GM10248 (cell line): ENCODE measurements at regions of chr13 and their contacts with region 1.

Region 1: GRCh38 chr13:49454388-49455006 is 10.4 kb downstream of the SETDB2 start:
- DNase-seq: peak; percentile 51
- CTCF ChIP-seq: no peak

Region 2: DNA sequence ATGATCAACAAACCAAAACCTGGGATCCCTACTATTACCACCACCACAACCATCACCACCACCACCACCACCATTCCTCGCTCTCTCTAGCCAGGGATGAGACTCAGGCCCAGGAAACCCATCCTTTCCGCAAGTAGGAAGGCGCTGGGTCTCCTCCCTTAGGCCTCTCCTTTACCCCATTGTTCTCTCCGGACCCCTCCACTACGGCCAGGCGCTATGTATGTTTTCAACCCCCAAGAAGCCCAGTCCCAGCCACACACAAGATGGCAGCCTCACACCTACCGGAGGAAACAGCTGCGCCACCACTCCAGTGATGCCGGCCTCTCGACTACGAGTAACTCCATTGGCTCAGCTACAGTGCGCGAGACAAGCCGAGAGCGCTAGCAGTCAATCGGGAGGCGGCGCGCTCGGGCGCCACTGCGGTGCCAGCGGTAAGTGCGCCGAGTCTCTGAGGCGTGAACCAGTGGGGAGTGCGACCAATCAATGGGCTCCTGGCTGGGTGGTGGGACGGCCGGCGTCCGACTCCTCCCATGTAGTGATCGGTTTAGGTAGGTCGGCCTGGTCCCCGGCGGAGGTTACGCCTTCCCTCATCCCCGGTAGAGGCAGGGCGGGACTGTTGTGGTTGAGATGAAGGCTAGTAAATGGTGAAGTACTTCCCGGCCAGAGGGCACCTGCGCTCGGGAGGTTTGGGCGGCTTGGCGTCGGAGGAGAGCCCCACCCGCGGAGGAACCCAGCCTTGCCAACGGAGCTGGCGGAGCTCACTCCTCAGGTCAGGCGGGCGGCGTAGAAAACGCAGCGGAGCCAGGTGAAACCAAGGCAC is 10.6 kb before region 1 on chr13 and contains the starts of genes CAB39L and SETDB2:
- CTCF ChIA-PET with region 1: interaction called, 6 read pairs
- POLR2A ChIA-PET with region 1: interaction called, 12 read pairs
- DNase-seq: peak; percentile 96
- CTCF ChIP-seq: peak; percentile 26

Region 3: GRCh38 chr13:49512578-49512977 is 58.1 kb after region 1 on chr13:
- CTCF ChIA-PET with region 1: no interaction called
- POLR2A ChIA-PET with region 1: no interaction called
- DNase-seq: no peak
- CTCF ChIP-seq: no peak

Region 4: DNA sequence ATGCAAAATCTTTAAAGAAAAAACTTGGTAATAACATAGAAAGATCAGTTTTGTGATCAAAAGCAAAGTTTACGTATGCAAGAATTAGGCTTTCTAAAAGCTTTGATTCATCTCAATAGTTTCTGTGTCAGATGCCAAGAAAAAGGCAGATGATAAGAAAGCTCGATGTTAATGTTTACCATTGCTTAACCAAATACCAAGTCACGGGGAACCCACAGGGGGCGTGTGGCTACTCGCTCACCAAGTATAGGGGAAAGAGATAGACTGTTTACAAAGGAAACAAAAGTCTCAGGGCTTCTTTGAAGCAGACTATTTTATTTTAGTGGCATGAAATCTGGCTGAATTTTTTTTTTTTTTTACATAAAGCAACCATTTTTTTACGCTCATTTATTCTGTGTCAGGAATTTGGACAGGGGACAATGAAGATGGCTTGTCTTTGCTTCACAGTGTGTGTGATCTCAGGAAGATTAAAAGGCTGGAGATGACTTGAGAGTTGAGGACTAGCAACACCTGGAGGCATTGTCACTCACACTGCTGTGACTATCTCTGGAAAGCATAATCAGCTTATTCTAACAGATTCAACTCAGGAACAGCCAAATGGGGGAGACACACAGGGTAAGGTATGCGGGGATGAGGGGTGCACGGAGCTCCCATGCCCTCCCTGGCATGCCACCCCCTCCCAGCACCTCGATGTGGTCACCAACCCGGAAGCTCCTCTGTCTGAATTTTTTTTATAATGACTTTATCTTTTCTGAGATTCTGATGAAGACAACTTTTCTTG is 106.0 kb after region 1 on chr13:
- CTCF ChIA-PET with region 1: no interaction called
- POLR2A ChIA-PET with region 1: no interaction called
- DNase-seq: no peak
- CTCF ChIP-seq: no peak